ENCODE measurements at regions of chr17 and their contacts with region 1.

Region 1: GRCh38 chr17:20254541-20254940 is 212.8 kb downstream of the LGALS9B start:
- DNase-seq: no peak
- H3K4me3 ChIP-seq: no peak overlapping the region
- H3K4me3 Mint-ChIP-seq: no peak overlapping the region
- H3K27ac ChIP-seq: no peak overlapping the region
- H3K27ac Mint-ChIP-seq: peak overlapping the region in 4 of 7 donors; percentile 11 to 83 (median 60)
- H3K4me1 ChIP-seq: peaks cover 11% of the 10 kb centered on the region
- H3K4me1 Mint-ChIP-seq: peaks cover 6 to 22% (median 18%) of the 10 kb centered on the region in 4 donors
- H3K27me3 ChIP-seq: no peaks in the 10 kb centered on the region
- H3K27me3 Mint-ChIP-seq: no peaks in the 10 kb centered on the region

Region 2: GRCh38 chr17:20241831-20242230 is 12.7 kb before region 1 on chr17:
- CTCF ChIA-PET with region 1: no interaction called
- POLR2A ChIA-PET with region 1: no interaction called
- intact Hi-C with region 1: loop called (anchors 2 kb)
- DNase-seq: no peak
- H3K4me3 ChIP-seq: no peak overlapping the region
- H3K4me3 Mint-ChIP-seq: no peak overlapping the region
- H3K27ac ChIP-seq: no peak overlapping the region
- H3K27ac Mint-ChIP-seq: peak overlapping the region in 1 of 7 donors; percentile 13
- H3K4me1 ChIP-seq: peaks cover 13% of the 10 kb centered on the region
- H3K4me1 Mint-ChIP-seq: peaks cover 11 to 13% (median 11%) of the 10 kb centered on the region in 4 donors
- H3K27me3 ChIP-seq: no peaks in the 10 kb centered on the region
- H3K27me3 Mint-ChIP-seq: no peaks in the 10 kb centered on the region

Region 3: DNA sequence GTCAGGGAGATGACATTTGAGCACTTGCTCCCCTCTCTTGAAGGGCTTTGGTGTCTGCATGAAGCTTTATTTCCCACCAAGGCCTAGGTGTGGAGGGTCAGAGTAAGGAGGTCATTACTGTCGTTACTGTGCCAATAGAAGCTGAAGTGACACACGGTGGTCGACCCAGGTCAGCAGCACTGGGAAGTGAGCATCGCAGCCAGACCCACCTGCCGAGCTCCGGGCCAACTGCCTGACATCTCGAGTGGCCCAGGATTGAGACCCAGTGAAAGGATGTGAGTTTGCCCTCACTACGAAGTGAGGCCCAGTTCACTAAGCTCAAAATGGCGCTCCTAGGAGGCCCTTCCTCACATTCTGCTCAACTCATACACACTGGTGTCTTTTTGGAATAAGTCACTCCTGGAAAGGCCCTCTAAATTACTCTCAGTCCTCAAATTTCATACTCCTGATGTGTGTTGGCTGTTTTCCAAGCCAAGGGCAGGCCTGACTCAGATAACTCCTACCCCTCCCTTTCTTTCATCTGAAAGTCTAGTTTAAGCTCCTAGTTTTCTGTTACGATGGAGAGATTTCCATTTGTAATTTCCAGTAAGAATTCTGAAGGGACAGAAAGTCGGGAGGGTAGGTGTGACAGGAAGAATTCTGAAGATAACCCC is 12.4 kb after region 1 on chr17:
- CTCF ChIA-PET with region 1: no interaction called
- POLR2A ChIA-PET with region 1: no interaction called
- intact Hi-C with region 1: no loop called
- DNase-seq: no peak
- H3K4me3 ChIP-seq: no peak overlapping the region
- H3K4me3 Mint-ChIP-seq: peak overlapping the region in 5 of 8 donors; percentile 8 to 79 (median 65)
- H3K27ac ChIP-seq: no peak overlapping the region
- H3K27ac Mint-ChIP-seq: peak overlapping the region in 4 of 7 donors; percentile 31 to 82 (median 57)
- H3K4me1 ChIP-seq: peaks cover 76% of the 10 kb centered on the region
- H3K4me1 Mint-ChIP-seq: peaks cover 41 to 80% (median 62%) of the 10 kb centered on the region in 4 donors
- H3K27me3 ChIP-seq: no peaks in the 10 kb centered on the region
- H3K27me3 Mint-ChIP-seq: no peaks in the 10 kb centered on the region

Region 4: DNA sequence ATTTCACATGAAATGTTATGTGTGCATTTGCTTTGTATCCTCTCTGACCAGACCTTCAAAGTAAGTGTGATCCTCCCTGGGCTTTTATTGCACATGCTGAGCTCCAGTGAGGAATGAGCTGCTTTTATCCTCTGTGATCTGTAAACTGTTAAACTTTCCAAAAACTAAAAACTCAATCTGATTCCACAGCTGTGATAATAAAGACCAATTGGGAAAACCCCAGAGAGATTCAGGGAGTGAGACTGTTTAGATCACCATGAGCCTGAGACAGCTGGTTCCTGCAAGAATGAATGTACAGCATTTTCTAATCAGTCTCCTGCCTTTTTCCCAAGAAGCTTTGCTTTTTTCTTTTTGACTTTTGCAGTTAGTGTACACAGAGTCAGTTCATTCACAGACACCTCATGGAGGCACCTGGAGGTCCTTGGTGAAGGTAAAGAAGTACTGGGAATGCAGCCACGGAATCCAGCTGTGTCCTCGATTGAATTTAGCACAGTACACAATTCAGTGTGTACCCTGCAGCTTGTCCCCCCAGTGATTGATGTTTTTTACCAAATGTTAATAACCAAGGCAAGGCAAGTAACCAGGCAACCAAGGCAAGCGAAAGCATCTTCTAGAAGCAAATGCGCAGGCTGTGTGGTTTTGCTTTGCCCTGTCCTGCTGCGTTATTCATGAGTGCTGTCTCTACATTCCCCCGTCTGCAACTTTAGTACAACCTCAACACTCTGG is 30.2 kb after region 1 on chr17:
- CTCF ChIA-PET with region 1: no interaction called
- POLR2A ChIA-PET with region 1: no interaction called
- intact Hi-C with region 1: no loop called
- DNase-seq: no peak
- H3K4me3 ChIP-seq: no peak overlapping the region
- H3K4me3 Mint-ChIP-seq: no peak overlapping the region
- H3K27ac ChIP-seq: no peak overlapping the region
- H3K27ac Mint-ChIP-seq: no peak overlapping the region
- H3K4me1 ChIP-seq: peaks cover 4% of the 10 kb centered on the region
- H3K4me1 Mint-ChIP-seq: peaks cover 9 to 25% (median 9%) of the 10 kb centered on the region in 4 donors
- H3K27me3 ChIP-seq: no peaks in the 10 kb centered on the region
- H3K27me3 Mint-ChIP-seq: no peaks in the 10 kb centered on the region

Measured in CD4-positive, alpha-beta memory T cell (primary cell).